B cell (primary cell): ENCODE measurements at regions of chr10 and their contacts with region 1.

Region 1: GRCh38 chr10:96642973-96643372 is 56.2 kb upstream of the TM9SF3 start:
- DNase-seq: peak; percentile 81
- ATAC-seq: no peak
- H3K4me3 ChIP-seq: no peak overlapping the region
- H3K4me3 Mint-ChIP-seq: no peak overlapping the region
- H3K27ac ChIP-seq: peak overlapping the region in 1 of 2 donors; percentile 76
- H3K27ac Mint-ChIP-seq: peak overlapping the region; percentile 74
- H3K4me1 ChIP-seq: peaks cover 39 to 57% of the 10 kb centered on the region in 2 donors
- H3K4me1 Mint-ChIP-seq: peaks cover 49% of the 10 kb centered on the region
- H3K27me3 ChIP-seq: no peaks in the 10 kb centered on the region
- H3K27me3 Mint-ChIP-seq: no peaks in the 10 kb centered on the region
- CTCF ChIP-seq: peak; percentile 73

Region 2: GRCh38 chr10:96014473-96015102 is 628.4 kb before region 1 on chr10:
- CTCF ChIA-PET with region 1: no interaction called
- POLR2A ChIA-PET with region 1: no interaction called
- intact Hi-C with region 1: no loop called
- DNase-seq: no peak
- ATAC-seq: no peak
- H3K4me3 ChIP-seq: no peak overlapping the region
- H3K4me3 Mint-ChIP-seq: no peak overlapping the region
- H3K27ac ChIP-seq: no peak overlapping the region
- H3K27ac Mint-ChIP-seq: no peak overlapping the region
- H3K4me1 ChIP-seq: peaks cover 0 to 5% of the 10 kb centered on the region in 2 donors
- H3K4me1 Mint-ChIP-seq: peaks cover 4% of the 10 kb centered on the region
- H3K27me3 ChIP-seq: no peaks in the 10 kb centered on the region
- H3K27me3 Mint-ChIP-seq: no peaks in the 10 kb centered on the region
- CTCF ChIP-seq: no peak

Region 3: DNA sequence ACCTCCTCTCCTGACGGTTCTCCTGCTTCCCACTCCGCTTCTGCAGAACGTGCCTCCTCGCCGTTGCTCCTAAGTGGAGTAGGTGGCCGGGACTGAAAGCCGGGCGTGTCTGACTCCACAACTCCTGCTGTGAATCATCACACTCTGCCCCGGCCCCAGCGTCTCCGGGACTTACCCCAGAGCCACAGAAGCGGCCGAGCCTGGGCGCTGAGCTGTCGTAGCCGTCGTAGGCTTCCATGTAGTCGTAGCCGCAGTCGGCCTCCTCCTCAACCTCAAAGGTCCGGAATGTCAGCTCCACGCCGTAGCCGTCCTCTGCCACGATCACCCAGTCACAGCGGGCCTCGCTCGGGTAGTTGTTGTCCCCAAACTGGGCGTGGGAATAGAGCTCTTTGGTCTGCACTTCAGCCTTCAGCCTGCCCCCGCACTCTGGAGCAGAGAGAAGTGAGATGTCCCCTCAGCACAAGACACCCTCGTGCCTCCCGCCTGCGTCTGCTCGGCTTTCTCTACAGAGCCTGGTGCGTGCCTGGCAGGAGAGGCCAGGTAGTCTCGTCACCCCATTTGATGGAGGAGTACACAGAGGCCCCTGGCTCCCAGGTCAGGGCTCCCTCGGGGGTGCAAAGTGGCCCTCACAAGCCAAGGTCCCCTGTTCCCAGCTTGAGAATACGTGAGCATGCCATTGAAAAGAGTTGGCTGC is 272.9 kb before region 1 on chr10:
- CTCF ChIA-PET with region 1: no interaction called
- POLR2A ChIA-PET with region 1: no interaction called
- intact Hi-C with region 1: no loop called
- DNase-seq: no peak
- ATAC-seq: no peak
- H3K4me3 ChIP-seq: no peak overlapping the region
- H3K4me3 Mint-ChIP-seq: no peak overlapping the region
- H3K27ac ChIP-seq: no peak overlapping the region
- H3K27ac Mint-ChIP-seq: no peak overlapping the region
- H3K4me1 ChIP-seq: peaks cover 6 to 8% of the 10 kb centered on the region in 2 donors
- H3K4me1 Mint-ChIP-seq: peaks cover 8% of the 10 kb centered on the region
- H3K27me3 ChIP-seq: peaks cover 0 to 6% (median 0%) of the 10 kb centered on the region in 4 experiments
- H3K27me3 Mint-ChIP-seq: peaks cover 19% of the 10 kb centered on the region
- CTCF ChIP-seq: no peak

Region 4: GRCh38 chr10:96395931-96396877 is 246.8 kb before region 1 on chr10:
- CTCF ChIA-PET with region 1: no interaction called
- POLR2A ChIA-PET with region 1: no interaction called
- intact Hi-C with region 1: loop called (anchors 5 kb)
- DNase-seq: peak; percentile 78
- ATAC-seq: peak; percentile 76
- H3K4me3 ChIP-seq: no peak overlapping the region
- H3K4me3 Mint-ChIP-seq: no peak overlapping the region
- H3K27ac ChIP-seq: no peak overlapping the region
- H3K27ac Mint-ChIP-seq: no peak overlapping the region
- H3K4me1 ChIP-seq: peaks cover 0 to 7% of the 10 kb centered on the region in 2 donors
- H3K4me1 Mint-ChIP-seq: peaks cover 1% of the 10 kb centered on the region
- H3K27me3 ChIP-seq: peaks cover 0 to 13% (median 5%) of the 10 kb centered on the region in 4 experiments
- H3K27me3 Mint-ChIP-seq: peaks cover 32% of the 10 kb centered on the region
- CTCF ChIP-seq: peak; percentile 91

Region 5: DNA sequence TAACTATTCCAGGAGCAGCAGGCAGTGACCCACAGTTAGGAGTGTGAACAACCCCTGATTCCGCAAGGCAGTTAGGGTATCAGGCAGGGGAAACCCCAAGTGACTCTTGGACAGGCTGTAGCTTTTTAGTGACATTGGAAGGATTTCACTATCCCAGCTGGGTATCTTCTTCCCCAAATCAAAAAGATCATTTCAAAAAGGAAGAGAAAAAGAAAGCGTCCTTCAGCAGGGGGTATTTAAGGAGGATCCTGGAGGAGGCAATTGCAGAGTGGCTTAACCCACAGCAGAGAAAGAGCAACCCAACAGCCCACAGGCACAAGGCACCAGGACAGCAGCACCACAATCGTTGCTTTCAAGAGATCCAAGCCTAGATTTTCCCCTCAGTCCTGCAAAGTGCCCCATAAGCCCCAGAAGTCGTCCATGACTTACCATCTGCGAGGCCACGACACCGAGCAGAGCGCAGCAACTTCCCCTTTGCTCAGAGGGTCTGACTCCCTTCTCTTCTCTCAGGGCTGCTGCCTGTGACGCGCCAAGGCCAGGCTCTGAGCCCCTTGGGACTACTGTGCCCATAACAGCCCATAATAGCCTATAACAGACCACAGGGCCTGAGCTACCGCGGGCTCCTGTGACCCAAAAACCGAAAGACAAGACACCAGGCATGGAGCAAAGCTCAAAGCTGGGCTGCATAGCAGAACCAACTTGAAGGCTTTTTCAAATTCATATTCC is 57.6 kb after region 1 on chr10:
- CTCF ChIA-PET with region 1: interaction called, 15 read pairs
- POLR2A ChIA-PET with region 1: interaction called, 3 read pairs
- intact Hi-C with region 1: loop called (anchors 1 kb)
- DNase-seq: peak; percentile 95
- ATAC-seq: peak; percentile 94
- H3K4me3 ChIP-seq: peak overlapping the region; percentile 75 to 97 (median 82)
- H3K4me3 Mint-ChIP-seq: peak overlapping the region; percentile 98
- H3K27ac ChIP-seq: peak overlapping the region; percentile 88 to 92
- H3K27ac Mint-ChIP-seq: peak overlapping the region; percentile 96
- H3K4me1 ChIP-seq: peaks cover 76 to 81% of the 10 kb centered on the region in 2 donors
- H3K4me1 Mint-ChIP-seq: peaks cover 77% of the 10 kb centered on the region
- H3K27me3 ChIP-seq: no peaks in the 10 kb centered on the region
- H3K27me3 Mint-ChIP-seq: no peaks in the 10 kb centered on the region
- CTCF ChIP-seq: no peak

Region 6: GRCh38 chr10:96743988-96744585 is 101.1 kb after region 1 on chr10:
- CTCF ChIA-PET with region 1: interaction called, 105 read pairs
- POLR2A ChIA-PET with region 1: interaction called, 5 read pairs
- intact Hi-C with region 1: loop called (anchors 1 kb)
- DNase-seq: peak; percentile 51
- ATAC-seq: no peak
- H3K4me3 ChIP-seq: peak overlapping the region in 1 of 5 experiments; percentile 3
- H3K4me3 Mint-ChIP-seq: peak overlapping the region; percentile 30
- H3K27ac ChIP-seq: peak overlapping the region; percentile 46 to 74
- H3K27ac Mint-ChIP-seq: peak overlapping the region; percentile 83
- H3K4me1 ChIP-seq: peaks cover 81 to 83% of the 10 kb centered on the region in 2 donors
- H3K4me1 Mint-ChIP-seq: peaks cover 52% of the 10 kb centered on the region
- H3K27me3 ChIP-seq: no peaks in the 10 kb centered on the region
- H3K27me3 Mint-ChIP-seq: no peaks in the 10 kb centered on the region
- CTCF ChIP-seq: no peak

Region 7: GRCh38 chr10:96831867-96832720 is 189.1 kb after region 1 on chr10 and contains the start of gene LCOR:
- CTCF ChIA-PET with region 1: interaction called, 75 read pairs
- POLR2A ChIA-PET with region 1: interaction called, 3 read pairs
- intact Hi-C with region 1: loop called (anchors 1 kb)
- DNase-seq: peak; percentile 96
- ATAC-seq: peak; percentile 69
- H3K4me3 ChIP-seq: peak within 1 kb of the TSS; percentile 64 to 86 (median 75)
- H3K4me3 Mint-ChIP-seq: peak within 1 kb of the TSS; percentile 91
- H3K27ac ChIP-seq: peak within 1 kb of the TSS; percentile 82 to 89
- H3K27ac Mint-ChIP-seq: peak within 1 kb of the TSS; percentile 95
- H3K4me1 ChIP-seq: peaks cover 32 to 41% of the 10 kb centered on the region in 2 donors
- H3K4me1 Mint-ChIP-seq: peaks cover 53% of the 10 kb centered on the region
- H3K27me3 ChIP-seq: no peaks in the 10 kb centered on the region
- H3K27me3 Mint-ChIP-seq: no peaks in the 10 kb centered on the region
- CTCF ChIP-seq: no peak
- total RNA-seq, gene LCOR: 70.0 and 79.8 TPM in 2 replicates

Region 8: GRCh38 chr10:96921655-96922054 is 278.7 kb after region 1 on chr10:
- CTCF ChIA-PET with region 1: no interaction called
- POLR2A ChIA-PET with region 1: no interaction called
- intact Hi-C with region 1: no loop called
- DNase-seq: no peak
- ATAC-seq: no peak
- H3K4me3 ChIP-seq: no peak overlapping the region
- H3K4me3 Mint-ChIP-seq: no peak overlapping the region
- H3K27ac ChIP-seq: no peak overlapping the region
- H3K27ac Mint-ChIP-seq: no peak overlapping the region
- H3K4me1 ChIP-seq: peaks cover 7 to 10% of the 10 kb centered on the region in 2 donors
- H3K4me1 Mint-ChIP-seq: peaks cover 38% of the 10 kb centered on the region
- H3K27me3 ChIP-seq: no peaks in the 10 kb centered on the region
- H3K27me3 Mint-ChIP-seq: no peaks in the 10 kb centered on the region
- CTCF ChIP-seq: no peak

Region 9: DNA sequence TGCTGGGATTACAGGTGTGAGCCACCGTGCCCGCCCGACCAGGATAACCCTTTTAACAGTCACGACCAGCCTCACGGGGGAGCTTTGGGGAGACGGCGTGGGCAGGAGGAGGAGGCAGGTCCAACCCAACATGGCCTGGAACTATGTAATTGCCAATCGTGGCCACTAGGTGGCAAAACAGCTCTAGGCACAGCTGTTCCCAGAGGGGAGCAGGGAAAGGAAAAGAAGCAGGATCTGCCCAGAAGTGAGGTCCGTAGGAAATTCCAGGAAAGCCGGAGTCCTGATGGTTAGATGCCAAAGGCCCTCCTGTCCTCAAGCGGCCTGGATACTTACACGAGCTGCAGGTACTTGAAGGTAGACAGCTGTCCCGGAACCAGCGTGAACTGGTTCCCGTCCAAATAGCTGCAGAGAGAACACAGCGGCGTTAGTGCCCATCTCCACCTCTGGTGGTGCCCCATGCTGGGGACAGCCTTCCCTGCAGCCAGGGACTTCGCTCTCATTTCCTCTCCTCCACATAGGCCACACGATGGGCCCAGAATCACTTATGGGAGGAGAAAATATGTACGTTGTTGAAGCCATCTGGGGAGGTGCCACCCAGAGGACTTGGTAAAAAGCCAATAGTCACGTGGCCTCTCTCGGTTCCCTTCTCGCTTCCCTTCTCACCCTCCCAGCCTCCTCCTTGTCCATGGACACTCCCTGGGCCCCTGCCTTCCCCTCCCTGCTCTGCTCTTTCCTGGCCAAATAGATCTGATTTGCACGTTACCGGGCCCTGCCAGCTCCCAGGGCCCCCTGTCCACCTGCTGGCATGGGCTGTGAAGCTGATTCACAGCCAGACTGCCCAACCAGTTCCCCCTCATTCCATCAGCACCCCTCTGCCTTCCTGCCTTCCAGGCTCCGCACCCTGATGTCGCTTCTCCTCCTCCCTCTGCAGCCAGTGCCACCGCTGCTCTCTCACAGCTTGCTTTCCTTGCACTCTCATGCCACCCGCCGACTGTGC is 394.7 kb after region 1 on chr10:
- CTCF ChIA-PET with region 1: interaction called, 12 read pairs
- POLR2A ChIA-PET with region 1: no interaction called
- intact Hi-C with region 1: no loop called
- DNase-seq: peak; percentile 83
- ATAC-seq: peak; percentile 97
- H3K4me3 ChIP-seq: peak overlapping the region; percentile 44 to 58 (median 50)
- H3K4me3 Mint-ChIP-seq: peak overlapping the region; percentile 86
- H3K27ac ChIP-seq: no peak overlapping the region
- H3K27ac Mint-ChIP-seq: peak overlapping the region; percentile 62
- H3K4me1 ChIP-seq: peaks cover 7 to 10% of the 10 kb centered on the region in 2 donors
- H3K4me1 Mint-ChIP-seq: peaks cover 18% of the 10 kb centered on the region
- H3K27me3 ChIP-seq: peaks cover 0 to 3% (median 0%) of the 10 kb centered on the region in 4 experiments
- H3K27me3 Mint-ChIP-seq: peaks cover 16% of the 10 kb centered on the region
- CTCF ChIP-seq: peak; percentile 92